B cell (primary cell): ENCODE measurements at regions of chr9 and their contacts with region 1.

Region 1: DNA sequence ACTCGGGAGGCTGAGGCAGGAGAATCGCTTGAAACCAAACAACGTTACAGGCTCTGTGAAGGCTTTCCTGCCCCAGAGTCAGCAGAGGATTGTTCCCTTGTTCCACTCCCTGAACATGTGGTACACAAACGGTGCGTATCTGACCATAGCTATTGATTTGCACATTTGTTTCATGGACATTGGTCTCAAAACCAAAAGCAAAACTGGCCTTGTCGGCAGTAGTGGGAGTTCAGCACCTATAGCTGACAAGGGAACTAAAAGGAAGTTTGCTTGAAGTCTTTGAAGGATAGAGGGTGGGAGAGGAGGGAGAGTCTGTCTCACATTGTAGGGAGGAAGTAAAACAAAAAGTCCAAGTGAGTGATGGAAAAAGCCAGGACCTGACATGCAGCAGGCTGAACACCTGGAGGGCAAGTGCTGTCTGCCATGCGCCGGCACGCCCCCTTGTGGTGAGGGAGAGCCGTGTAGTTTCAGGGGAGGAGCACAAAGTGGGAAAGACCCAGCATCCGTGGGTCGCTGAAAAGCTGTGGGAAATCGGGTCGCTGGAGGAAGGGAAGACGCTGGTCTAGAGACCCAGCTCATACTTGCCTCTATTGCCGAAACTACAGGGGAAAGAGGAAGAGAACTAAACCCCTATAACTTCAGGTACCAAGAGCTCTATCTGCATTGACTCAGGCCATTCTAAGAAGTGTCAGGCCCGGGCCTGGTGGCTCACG is 58.0 kb downstream of the RAD23B start:
- DNase-seq: peak; percentile 84
- ATAC-seq: peak; percentile 84
- H3K4me3 ChIP-seq: peak overlapping the region in 3 of 5 experiments; percentile 2 to 38 (median 17)
- H3K4me3 Mint-ChIP-seq: peak overlapping the region; percentile 58
- H3K27ac ChIP-seq: no peak overlapping the region
- H3K27ac Mint-ChIP-seq: no peak overlapping the region
- H3K4me1 ChIP-seq: peaks cover 3 to 8% of the 10 kb centered on the region in 2 donors
- H3K4me1 Mint-ChIP-seq: peaks cover 8% of the 10 kb centered on the region
- H3K27me3 ChIP-seq: peaks cover 0 to 2% (median 0%) of the 10 kb centered on the region in 4 experiments
- H3K27me3 Mint-ChIP-seq: no peaks in the 10 kb centered on the region
- CTCF ChIP-seq: peak; percentile 94

Region 2: DNA sequence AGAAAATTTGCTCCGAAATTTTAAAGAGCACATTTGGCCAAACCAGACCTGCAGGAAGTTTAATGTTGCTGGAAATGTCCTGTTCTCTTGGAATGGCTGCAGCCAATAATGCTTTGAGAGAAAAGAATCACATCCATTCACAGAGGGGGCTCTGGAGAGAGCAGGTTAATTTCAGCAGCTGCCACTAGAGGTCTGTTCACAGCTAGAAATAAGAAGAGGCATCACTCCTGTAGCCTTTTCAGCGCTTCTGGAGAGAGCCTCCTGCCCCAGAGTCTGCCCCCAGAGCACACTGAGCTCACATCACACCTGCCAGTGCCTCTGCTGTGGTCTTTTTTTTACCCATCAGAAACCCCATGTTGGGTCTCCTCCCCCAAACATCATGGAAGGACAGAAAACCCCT is 182.8 kb before region 1 on chr9:
- CTCF ChIA-PET with region 1: interaction called, 10 read pairs
- POLR2A ChIA-PET with region 1: no interaction called
- intact Hi-C with region 1: no loop called
- DNase-seq: peak; percentile 9
- ATAC-seq: no peak
- H3K4me3 ChIP-seq: no peak overlapping the region
- H3K4me3 Mint-ChIP-seq: no peak overlapping the region
- H3K27ac ChIP-seq: no peak overlapping the region
- H3K27ac Mint-ChIP-seq: no peak overlapping the region
- H3K4me1 ChIP-seq: no peaks in the 10 kb centered on the region
- H3K4me1 Mint-ChIP-seq: no peaks in the 10 kb centered on the region
- H3K27me3 ChIP-seq: peaks cover 0 to 9% (median 2%) of the 10 kb centered on the region in 4 experiments
- H3K27me3 Mint-ChIP-seq: peaks cover 18% of the 10 kb centered on the region
- CTCF ChIP-seq: peak; percentile 21

Region 3: DNA sequence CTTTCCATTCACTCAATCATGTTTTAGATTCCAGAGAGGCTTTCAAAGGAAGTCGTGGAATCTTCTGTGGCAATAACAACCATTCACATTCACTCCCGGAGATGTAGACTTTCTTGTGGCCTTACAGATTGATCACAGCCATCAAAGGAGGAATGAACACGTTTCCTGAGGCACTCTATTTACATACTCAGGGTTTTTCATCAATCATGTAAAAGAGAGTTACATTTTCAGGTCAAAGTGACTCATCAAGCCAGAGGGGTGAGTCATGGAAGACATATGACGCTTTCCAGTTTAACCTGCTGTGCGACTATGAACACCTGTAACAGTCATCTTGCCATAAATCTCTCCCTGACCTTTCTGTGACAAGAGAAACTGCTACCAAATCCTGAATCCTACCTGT is 97.3 kb before region 1 on chr9:
- CTCF ChIA-PET with region 1: interaction called, 336 read pairs
- POLR2A ChIA-PET with region 1: interaction called, 3 read pairs
- intact Hi-C with region 1: loop called (anchors 1 kb)
- DNase-seq: no peak
- ATAC-seq: peak; percentile 21
- H3K4me3 ChIP-seq: no peak overlapping the region
- H3K4me3 Mint-ChIP-seq: no peak overlapping the region
- H3K27ac ChIP-seq: no peak overlapping the region
- H3K27ac Mint-ChIP-seq: no peak overlapping the region
- H3K4me1 ChIP-seq: no peaks in the 10 kb centered on the region
- H3K4me1 Mint-ChIP-seq: peaks cover 12% of the 10 kb centered on the region
- H3K27me3 ChIP-seq: no peaks in the 10 kb centered on the region
- H3K27me3 Mint-ChIP-seq: peaks cover 3% of the 10 kb centered on the region
- CTCF ChIP-seq: no peak

Region 4: DNA sequence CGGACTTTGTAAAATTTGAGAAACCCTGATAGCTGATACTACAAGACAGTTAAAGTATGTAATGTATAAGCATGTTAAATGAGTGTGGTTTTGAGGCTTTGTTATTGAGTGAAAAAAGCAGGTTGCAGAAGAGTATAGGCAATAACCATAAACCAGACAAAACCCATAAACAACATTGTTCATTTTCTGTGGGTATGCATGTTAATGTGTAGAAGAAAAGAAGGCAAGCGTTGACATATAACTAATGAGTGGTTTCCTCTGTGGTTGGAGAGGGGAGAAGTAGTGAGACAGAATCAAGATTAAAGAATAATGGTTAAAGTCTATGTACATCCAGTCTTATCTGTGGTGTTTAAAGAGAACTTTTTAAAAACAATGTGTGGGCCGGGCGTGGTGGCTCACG is 31.8 kb before region 1 on chr9:
- CTCF ChIA-PET with region 1: interaction called, 22 read pairs
- POLR2A ChIA-PET with region 1: no interaction called
- intact Hi-C with region 1: no loop called
- DNase-seq: no peak
- ATAC-seq: no peak
- H3K4me3 ChIP-seq: no peak overlapping the region
- H3K4me3 Mint-ChIP-seq: no peak overlapping the region
- H3K27ac ChIP-seq: no peak overlapping the region
- H3K27ac Mint-ChIP-seq: no peak overlapping the region
- H3K4me1 ChIP-seq: peaks cover 2 to 5% of the 10 kb centered on the region in 2 donors
- H3K4me1 Mint-ChIP-seq: peaks cover 23% of the 10 kb centered on the region
- H3K27me3 ChIP-seq: no peaks in the 10 kb centered on the region
- H3K27me3 Mint-ChIP-seq: no peaks in the 10 kb centered on the region
- CTCF ChIP-seq: no peak

Region 5: DNA sequence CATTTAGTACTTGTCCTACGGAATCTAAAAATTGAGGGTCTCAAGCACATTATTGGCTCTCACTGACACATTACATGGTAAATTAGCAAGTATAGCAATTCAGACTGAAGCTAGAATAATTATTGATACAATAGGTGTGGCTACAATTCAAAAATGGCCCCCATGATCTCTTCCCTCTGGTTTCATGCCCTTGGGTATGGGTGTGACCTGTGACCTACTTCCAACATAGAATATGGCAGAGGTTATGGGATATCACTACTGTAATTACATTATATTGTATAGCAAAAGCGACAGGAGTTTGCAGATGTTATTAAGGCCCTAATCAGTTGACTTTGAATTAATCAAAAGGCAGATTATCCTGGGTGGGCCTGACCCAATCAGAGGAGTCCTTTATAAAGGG is 72.2 kb after region 1 on chr9:
- CTCF ChIA-PET with region 1: no interaction called
- POLR2A ChIA-PET with region 1: no interaction called
- intact Hi-C with region 1: no loop called
- DNase-seq: no peak
- ATAC-seq: no peak
- H3K4me3 ChIP-seq: no peak overlapping the region
- H3K4me3 Mint-ChIP-seq: no peak overlapping the region
- H3K27ac ChIP-seq: no peak overlapping the region
- H3K27ac Mint-ChIP-seq: no peak overlapping the region
- H3K4me1 ChIP-seq: no peaks in the 10 kb centered on the region
- H3K4me1 Mint-ChIP-seq: no peaks in the 10 kb centered on the region
- H3K27me3 ChIP-seq: no peaks in the 10 kb centered on the region
- H3K27me3 Mint-ChIP-seq: peaks cover 6% of the 10 kb centered on the region
- CTCF ChIP-seq: no peak

Region 6: GRCh38 chr9:107489687-107490605 is 148.9 kb after region 1 on chr9 and contains the start of gene KLF4:
- CTCF ChIA-PET with region 1: no interaction called
- POLR2A ChIA-PET with region 1: no interaction called
- intact Hi-C with region 1: no loop called
- DNase-seq: peak; percentile 86
- ATAC-seq: peak; percentile 74
- H3K4me3 ChIP-seq: peak within 1 kb of the TSS; percentile 53 to 86 (median 68)
- H3K4me3 Mint-ChIP-seq: peak within 1 kb of the TSS; percentile 87
- H3K27ac ChIP-seq: peak within 1 kb of the TSS in 1 of 2 donors; percentile 51
- H3K27ac Mint-ChIP-seq: peak within 1 kb of the TSS; percentile 78
- H3K4me1 ChIP-seq: peaks cover 35 to 42% of the 10 kb centered on the region in 2 donors
- H3K4me1 Mint-ChIP-seq: peaks cover 22% of the 10 kb centered on the region
- H3K27me3 ChIP-seq: peaks cover 0 to 51% (median 26%) of the 10 kb centered on the region in 4 experiments
- H3K27me3 Mint-ChIP-seq: peaks cover 49% of the 10 kb centered on the region
- CTCF ChIP-seq: no peak
- total RNA-seq, gene KLF4: 3.7 and 3.8 TPM in 2 replicates